Left ventricle myocardium inferior (tissue), 1 donor: ENCODE measurements at regions of chr9 and their contacts with region 1.

Region 1: GRCh38 chr9:94783102-94783664 is 56.7 kb downstream of the AOPEP start:
- DNase-seq: peak; percentile 53
- H3K4me3 ChIP-seq: no peak overlapping the region
- H3K27ac ChIP-seq: peak overlapping the region; percentile 85
- H3K4me1 ChIP-seq: peaks cover 45% of the 10 kb centered on the region
- H3K27me3 ChIP-seq: no peaks in the 10 kb centered on the region
- CTCF ChIP-seq: peak; percentile 81

Region 2: DNA sequence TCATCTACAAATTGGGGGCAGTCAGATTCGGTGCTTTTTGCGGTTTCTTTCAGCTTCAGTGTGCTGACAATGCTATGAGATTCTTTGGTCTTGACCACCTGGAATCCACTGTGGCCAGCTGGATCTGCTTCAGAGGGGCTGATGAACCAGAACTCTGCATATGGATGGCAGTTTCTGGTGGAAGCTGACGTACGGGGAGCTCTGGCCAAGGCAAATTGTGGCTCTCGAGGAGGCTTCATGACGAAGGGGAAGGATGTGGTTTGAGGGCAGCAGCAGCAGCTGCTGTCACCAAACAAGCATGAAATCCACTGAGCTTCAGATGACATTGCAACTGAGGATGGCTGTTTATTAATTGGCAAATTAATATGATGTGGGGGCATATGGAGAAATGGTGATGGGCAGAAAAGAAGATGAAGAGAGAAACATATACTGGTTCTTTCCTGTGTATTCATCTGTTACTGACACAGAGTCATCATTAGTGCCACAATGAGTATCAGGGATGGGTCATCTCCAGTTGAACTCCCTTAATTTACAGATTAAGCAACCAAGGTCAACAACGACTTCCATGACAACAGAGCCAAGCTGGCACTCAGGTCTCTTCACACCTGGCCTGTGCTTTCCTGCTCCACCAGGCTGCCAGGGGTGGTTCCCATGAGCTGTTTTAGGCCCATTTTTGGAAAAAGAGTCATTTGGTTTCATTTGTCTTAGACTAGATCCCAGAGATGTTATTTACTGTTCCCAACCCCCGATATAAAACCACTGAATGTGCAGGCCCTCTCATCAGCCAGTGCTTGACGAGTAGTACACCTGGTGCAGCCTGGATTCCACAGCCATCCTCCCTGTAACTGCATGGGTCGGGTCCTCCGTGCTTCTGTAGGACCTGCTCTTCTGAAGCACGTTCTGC is 78.0 kb after region 1 on chr9:
- intact Hi-C with region 1: loop called (anchors 10 kb)
- DNase-seq: no peak
- H3K4me3 ChIP-seq: no peak overlapping the region
- H3K27ac ChIP-seq: no peak overlapping the region
- H3K4me1 ChIP-seq: peaks cover 33% of the 10 kb centered on the region
- H3K27me3 ChIP-seq: no peaks in the 10 kb centered on the region
- CTCF ChIP-seq: no peak

Region 3: GRCh38 chr9:95025213-95026147 is 242.3 kb after region 1 on chr9:
- intact Hi-C with region 1: loop called (anchors 10 kb)
- DNase-seq: peak; percentile 68
- H3K4me3 ChIP-seq: peak overlapping the region; percentile 42
- H3K27ac ChIP-seq: peak overlapping the region; percentile 84
- H3K4me1 ChIP-seq: peaks cover 100% of the 10 kb centered on the region
- H3K27me3 ChIP-seq: no peaks in the 10 kb centered on the region
- CTCF ChIP-seq: peak; percentile 56

Region 4: DNA sequence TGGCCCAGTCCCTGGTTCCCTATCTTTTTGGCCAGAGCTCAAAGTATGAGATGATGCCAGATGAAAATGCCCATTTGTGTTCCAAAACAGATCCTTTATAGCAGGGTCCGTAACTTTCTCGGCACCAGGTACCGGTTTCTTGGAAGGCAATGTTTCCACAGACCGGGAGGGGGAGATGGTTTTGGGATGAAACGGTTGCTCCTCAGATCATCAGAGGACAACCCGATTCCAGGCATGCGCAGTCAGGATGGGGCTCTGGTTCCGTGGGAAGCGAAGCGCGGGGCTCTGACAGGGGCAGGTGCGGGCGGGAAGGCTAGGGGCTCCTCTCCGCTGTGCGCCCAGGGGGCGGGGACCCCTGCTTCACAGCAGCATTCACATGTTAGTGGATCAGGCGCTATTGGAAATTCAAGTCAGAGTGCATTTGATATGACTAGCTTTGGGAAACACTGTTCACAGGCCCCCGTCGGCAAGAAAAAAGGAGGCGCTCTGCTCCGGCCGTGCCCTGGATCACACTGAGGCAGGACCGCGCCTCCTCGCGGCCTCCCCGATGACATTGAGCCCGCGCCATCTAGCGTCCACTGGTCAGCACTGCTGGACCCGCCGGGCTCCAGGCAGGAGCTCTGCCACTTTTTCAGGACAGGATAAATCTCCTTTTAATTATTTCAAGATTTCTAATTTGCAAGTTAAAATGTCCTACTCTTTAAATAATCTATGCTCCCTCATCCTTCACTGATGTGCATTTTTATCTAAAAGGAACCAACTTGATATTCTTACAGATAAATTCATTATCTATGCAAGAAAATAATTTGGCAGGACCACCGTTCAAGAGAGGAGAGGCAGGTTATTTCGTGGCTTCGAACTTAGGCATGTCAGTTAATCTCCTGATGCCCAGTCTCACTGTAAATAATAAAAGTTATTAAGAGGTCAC is 344.3 kb after region 1 on chr9:
- intact Hi-C with region 1: loop called (anchors 5 kb)
- DNase-seq: peak; percentile 86
- H3K4me3 ChIP-seq: peak overlapping the region; percentile 64
- H3K27ac ChIP-seq: no peak overlapping the region
- H3K4me1 ChIP-seq: peaks cover 18% of the 10 kb centered on the region
- H3K27me3 ChIP-seq: no peaks in the 10 kb centered on the region
- CTCF ChIP-seq: peak; percentile 99